ENCODE measurements at regions of chr10 and their contacts with region 1.

Region 1: GRCh38 chr10:114208351-114208750 is 29.2 kb downstream of the TDRD1 start:
- DNase-seq: peak; percentile 26 to 45
- H3K4me3 ChIP-seq: no peak overlapping the region
- H3K4me3 Mint-ChIP-seq: no peak overlapping the region
- H3K27ac Mint-ChIP-seq: no peak overlapping the region
- H3K4me1 ChIP-seq: peaks cover 19% of the 10 kb centered on the region
- H3K4me1 Mint-ChIP-seq: no peaks in the 10 kb centered on the region
- H3K27me3 ChIP-seq: no peaks in the 10 kb centered on the region
- H3K27me3 Mint-ChIP-seq: no peaks in the 10 kb centered on the region
- CTCF ChIP-seq: no peak

Region 2: DNA sequence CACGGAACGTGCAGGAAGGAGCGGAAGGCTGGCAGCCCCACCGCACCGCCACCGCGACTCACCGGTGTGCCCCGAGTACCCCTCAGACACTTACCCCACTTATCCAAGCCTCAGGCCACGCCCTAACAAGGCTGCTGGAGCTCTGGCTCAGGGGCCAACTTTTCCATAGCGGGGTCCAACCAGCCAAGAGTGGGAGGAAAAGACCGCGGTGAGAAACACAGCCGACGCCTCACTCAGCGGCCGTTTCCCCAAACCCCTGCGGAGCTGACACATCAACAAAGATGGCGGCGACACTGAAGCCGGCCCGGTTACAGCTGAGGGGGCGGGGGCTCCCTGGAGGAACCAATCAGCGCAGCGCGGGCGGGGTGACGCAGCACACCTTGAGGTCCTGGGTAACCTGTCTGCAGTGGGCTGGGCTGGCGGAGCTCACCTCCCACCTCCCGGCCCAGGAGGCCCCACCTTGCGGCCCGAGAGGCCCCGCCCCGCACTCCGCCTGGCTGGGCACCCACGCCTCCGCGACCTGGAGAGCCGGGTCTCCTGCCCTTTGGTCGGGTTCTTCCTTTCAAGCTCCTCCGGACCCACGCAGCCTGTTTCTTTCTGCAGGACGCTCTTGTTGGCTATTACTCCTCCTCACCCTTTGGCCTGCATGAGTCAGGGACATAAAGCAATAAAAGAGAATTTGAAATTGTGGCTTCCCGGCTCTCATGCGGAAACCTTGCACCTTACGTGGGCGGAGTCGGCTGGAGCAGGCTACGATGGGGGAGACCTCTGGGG is 34.2 kb before region 1 on chr10 and contains the start of gene CCDC186:
- CTCF ChIA-PET with region 1: no interaction called
- POLR2A ChIA-PET with region 1: no interaction called
- intact Hi-C with region 1: loop called (anchors 2 kb)
- DNase-seq: peak; percentile 99
- H3K4me3 ChIP-seq: peak within 1 kb of the TSS; percentile 79
- H3K4me3 Mint-ChIP-seq: peak within 1 kb of the TSS; percentile 100
- H3K27ac Mint-ChIP-seq: peak within 1 kb of the TSS; percentile 100
- H3K4me1 ChIP-seq: peaks cover 9% of the 10 kb centered on the region; the same call in 1 of the 2 replicates
- H3K4me1 Mint-ChIP-seq: no peaks in the 10 kb centered on the region
- H3K27me3 ChIP-seq: no peaks in the 10 kb centered on the region
- H3K27me3 Mint-ChIP-seq: no peaks in the 10 kb centered on the region
- CTCF ChIP-seq: no peak
- total RNA-seq, gene CCDC186: 26.3 and 30.4 TPM in 2 replicates

Region 3: DNA sequence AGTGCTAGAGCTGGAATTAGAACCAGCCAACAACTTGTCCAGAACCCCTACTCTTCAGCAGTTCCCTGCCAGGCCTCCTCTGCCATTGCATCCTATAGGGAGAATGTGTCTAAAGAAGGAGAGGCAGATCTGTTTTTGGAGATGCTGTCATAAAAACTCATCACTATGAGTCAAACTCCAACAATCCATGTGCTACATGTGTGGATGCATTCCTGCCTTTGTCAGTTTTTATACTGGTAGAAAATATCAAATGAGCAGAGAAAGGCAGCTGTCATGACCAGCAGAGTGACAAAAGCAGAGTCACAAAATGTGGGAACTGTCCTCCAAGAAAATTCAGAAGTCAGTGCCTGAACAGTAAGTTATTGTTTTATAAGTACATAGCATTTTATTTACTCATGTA is 356.7 kb after region 1 on chr10:
- CTCF ChIA-PET with region 1: no interaction called
- POLR2A ChIA-PET with region 1: no interaction called
- intact Hi-C with region 1: no loop called
- DNase-seq: no peak
- H3K4me3 ChIP-seq: no peak overlapping the region
- H3K4me3 Mint-ChIP-seq: no peak overlapping the region
- H3K27ac Mint-ChIP-seq: no peak overlapping the region
- H3K4me1 ChIP-seq: no peaks in the 10 kb centered on the region
- H3K4me1 Mint-ChIP-seq: no peaks in the 10 kb centered on the region
- H3K27me3 ChIP-seq: no peaks in the 10 kb centered on the region
- H3K27me3 Mint-ChIP-seq: no peaks in the 10 kb centered on the region
- CTCF ChIP-seq: no peak

Measured in Caco-2 (cell line).